ENCODE measurements at regions of chr20 and their contacts with region 1.

Region 1: DNA sequence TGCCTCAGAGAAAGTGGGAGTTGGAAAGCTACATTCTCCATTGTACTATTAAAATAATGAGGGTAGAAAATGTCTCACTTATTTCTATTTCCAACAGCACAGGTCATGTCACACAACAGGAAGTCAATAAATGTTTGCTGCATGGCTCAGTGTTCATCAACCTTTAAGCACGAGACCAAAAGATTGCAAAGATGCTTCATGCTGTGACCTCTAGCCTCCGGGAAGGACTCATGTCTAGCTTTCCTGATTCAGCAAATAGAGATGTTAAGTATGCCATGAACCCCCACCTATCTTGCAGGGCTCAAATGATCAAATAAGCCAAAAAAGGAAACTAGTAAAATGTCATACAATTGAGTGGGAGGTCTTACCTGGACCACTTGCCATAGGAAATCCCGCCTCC is 57.4 kb downstream of the NCOA6 start:
- DNase-seq: peak; percentile 80
- ATAC-seq: peak; percentile 75
- H3K4me3 ChIP-seq: no peak overlapping the region
- H3K27ac ChIP-seq: peak overlapping the region; percentile 68
- H3K4me1 ChIP-seq: peaks cover 12% of the 10 kb centered on the region
- H3K27me3 ChIP-seq: no peaks in the 10 kb centered on the region
- CTCF ChIP-seq: no peak
- POLR2A ChIP-seq: no peak
- RAD21 ChIP-seq: no peak

Region 2: GRCh38 chr20:34538671-34539123 is 229.4 kb before region 1 on chr20:
- CTCF ChIA-PET with region 1: no interaction called
- POLR2A ChIA-PET with region 1: no interaction called
- dilution Hi-C with region 1: no loop called
- in situ Hi-C with region 1: no loop called
- intact Hi-C with region 1: loop called (anchors 1 kb)
- DNase-seq: peak; percentile 57
- ATAC-seq: peak; percentile 91
- H3K4me3 ChIP-seq: no peak overlapping the region
- H3K27ac ChIP-seq: no peak overlapping the region
- H3K4me1 ChIP-seq: no peaks in the 10 kb centered on the region
- H3K27me3 ChIP-seq: no peaks in the 10 kb centered on the region
- CTCF ChIP-seq: peak; percentile 65
- POLR2A ChIP-seq: no peak
- RAD21 ChIP-seq: peak; percentile 55

Region 3: DNA sequence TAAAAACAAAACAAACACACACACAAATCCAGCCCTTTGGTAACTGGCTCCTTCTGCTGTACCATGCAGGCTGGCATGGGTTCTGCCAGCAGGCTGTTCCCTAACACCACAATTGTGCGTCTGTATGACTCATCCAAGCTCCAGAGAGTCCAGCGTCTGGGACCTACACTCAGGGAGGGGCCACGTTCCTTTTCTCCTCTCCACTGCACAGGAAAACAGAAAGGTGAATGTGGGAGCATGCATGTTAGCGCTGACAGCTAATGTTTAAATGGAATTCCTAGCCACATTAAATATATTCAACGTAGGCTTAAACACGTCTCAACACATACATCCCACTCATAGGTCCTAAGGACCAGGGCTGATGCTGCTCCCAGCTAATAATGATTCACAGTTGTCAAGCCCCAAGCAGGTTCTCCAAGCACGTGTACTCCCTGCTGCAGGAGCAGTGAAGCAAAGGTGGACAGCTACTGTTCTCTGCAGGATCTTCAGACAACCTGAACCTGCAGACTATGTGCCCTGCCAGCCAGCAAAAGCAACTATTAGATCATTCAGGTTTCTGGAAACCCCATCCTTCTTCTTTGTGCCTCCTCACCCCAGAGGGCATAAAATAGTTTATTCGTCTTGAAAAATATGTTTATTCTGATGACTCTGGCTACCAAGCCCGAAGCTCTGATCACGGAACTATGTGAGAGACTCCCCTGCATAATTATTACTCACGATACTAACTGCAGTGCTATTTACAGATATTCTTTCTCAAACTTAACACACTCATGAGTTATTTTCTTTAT is 188.7 kb before region 1 on chr20:
- CTCF ChIA-PET with region 1: interaction called, 12 read pairs
- POLR2A ChIA-PET with region 1: no interaction called
- dilution Hi-C with region 1: no loop called
- in situ Hi-C with region 1: loop called (anchors 10 kb)
- intact Hi-C with region 1: loop called (anchors 1 kb)
- DNase-seq: peak; percentile 82
- ATAC-seq: peak; percentile 89
- H3K4me3 ChIP-seq: no peak overlapping the region
- H3K27ac ChIP-seq: no peak overlapping the region
- H3K4me1 ChIP-seq: peaks cover 17% of the 10 kb centered on the region
- H3K27me3 ChIP-seq: no peaks in the 10 kb centered on the region
- CTCF ChIP-seq: peak; percentile 84
- POLR2A ChIP-seq: no peak
- RAD21 ChIP-seq: peak; percentile 89

Region 4: DNA sequence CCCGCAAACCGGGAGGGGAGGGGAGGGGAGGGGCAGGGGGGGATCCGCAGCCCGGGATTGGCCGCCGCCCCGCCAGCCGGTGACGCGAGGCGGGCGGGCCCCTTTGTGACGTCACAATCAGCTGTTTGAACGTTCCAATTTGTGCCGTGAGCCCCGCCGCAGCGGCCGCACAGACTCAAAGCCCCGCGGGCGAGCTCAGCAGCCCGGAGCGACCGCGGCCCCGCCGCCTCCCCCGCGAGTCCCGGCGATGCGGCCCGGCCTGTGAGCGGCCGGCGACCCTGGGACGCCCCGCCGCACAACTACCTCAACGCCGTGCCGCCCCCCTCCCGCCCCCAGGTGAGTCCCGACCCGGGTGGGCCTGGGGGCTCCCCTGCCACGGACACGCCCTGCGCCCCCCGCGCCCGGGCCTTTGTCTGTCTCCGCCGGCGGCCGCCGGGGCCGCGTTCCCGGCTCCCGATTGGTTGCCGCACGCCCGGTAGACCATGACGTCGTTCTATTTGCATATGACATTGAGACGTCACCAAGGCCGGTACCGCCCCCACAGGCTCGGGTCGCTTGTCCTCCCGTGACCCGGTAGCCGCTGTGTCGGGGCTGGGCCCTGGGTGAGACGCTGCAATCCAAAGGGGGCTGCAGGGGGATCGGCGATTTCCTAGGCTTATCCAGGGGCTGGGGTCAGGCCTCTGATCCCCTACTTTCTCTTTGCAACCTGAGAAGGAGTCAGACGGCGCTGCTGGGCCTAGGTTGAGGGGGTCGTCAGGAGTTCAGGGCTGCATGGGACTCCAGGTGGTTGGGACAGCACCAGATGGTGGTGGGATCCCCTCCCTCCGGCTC is 63.7 kb before region 1 on chr20 and contains the start of gene TP53INP2:
- CTCF ChIA-PET with region 1: no interaction called
- POLR2A ChIA-PET with region 1: no interaction called
- dilution Hi-C with region 1: no loop called
- in situ Hi-C with region 1: no loop called
- intact Hi-C with region 1: loop called (anchors 5 kb)
- DNase-seq: peak; percentile 91
- ATAC-seq: peak; percentile 76
- H3K4me3 ChIP-seq: peak within 1 kb of the TSS; percentile 69
- H3K27ac ChIP-seq: peak within 1 kb of the TSS; percentile 56
- H3K4me1 ChIP-seq: peaks cover 8% of the 10 kb centered on the region
- H3K27me3 ChIP-seq: no peaks in the 10 kb centered on the region
- CTCF ChIP-seq: no peak
- POLR2A ChIP-seq: peak; percentile 96
- RAD21 ChIP-seq: no peak
- total RNA-seq, gene TP53INP2: 1.1 and 1.3 TPM in 2 replicates

Region 5: GRCh38 chr20:34709831-34710567 is 58.1 kb before region 1 on chr20:
- CTCF ChIA-PET with region 1: interaction called, 10 read pairs
- POLR2A ChIA-PET with region 1: no interaction called
- dilution Hi-C with region 1: no loop called
- in situ Hi-C with region 1: no loop called
- intact Hi-C with region 1: loop called (anchors 5 kb)
- DNase-seq: peak; percentile 51
- ATAC-seq: peak; percentile 48
- H3K4me3 ChIP-seq: peak overlapping the region; percentile 57
- H3K27ac ChIP-seq: peak overlapping the region; percentile 24
- H3K4me1 ChIP-seq: peaks cover 22% of the 10 kb centered on the region
- H3K27me3 ChIP-seq: no peaks in the 10 kb centered on the region
- CTCF ChIP-seq: peak; percentile 33
- POLR2A ChIP-seq: no peak
- RAD21 ChIP-seq: no peak

Region 6: GRCh38 chr20:34753706-34754461 is 14.2 kb before region 1 on chr20:
- CTCF ChIA-PET with region 1: interaction called, 11 read pairs
- POLR2A ChIA-PET with region 1: no interaction called
- dilution Hi-C with region 1: no loop called
- in situ Hi-C with region 1: no loop called
- intact Hi-C with region 1: no loop called
- DNase-seq: peak; percentile 60
- ATAC-seq: peak; percentile 77
- H3K4me3 ChIP-seq: no peak overlapping the region
- H3K27ac ChIP-seq: peak overlapping the region; percentile 55; the same call in 1 of the 2 replicates
- H3K4me1 ChIP-seq: peaks cover 21% of the 10 kb centered on the region
- H3K27me3 ChIP-seq: no peaks in the 10 kb centered on the region
- CTCF ChIP-seq: no peak
- POLR2A ChIP-seq: no peak
- RAD21 ChIP-seq: no peak

Measured in IMR-90 (cell line).